GM12878 (cell line): ENCODE measurements at regions of chr6 and their contacts with region 1.

Region 1: DNA sequence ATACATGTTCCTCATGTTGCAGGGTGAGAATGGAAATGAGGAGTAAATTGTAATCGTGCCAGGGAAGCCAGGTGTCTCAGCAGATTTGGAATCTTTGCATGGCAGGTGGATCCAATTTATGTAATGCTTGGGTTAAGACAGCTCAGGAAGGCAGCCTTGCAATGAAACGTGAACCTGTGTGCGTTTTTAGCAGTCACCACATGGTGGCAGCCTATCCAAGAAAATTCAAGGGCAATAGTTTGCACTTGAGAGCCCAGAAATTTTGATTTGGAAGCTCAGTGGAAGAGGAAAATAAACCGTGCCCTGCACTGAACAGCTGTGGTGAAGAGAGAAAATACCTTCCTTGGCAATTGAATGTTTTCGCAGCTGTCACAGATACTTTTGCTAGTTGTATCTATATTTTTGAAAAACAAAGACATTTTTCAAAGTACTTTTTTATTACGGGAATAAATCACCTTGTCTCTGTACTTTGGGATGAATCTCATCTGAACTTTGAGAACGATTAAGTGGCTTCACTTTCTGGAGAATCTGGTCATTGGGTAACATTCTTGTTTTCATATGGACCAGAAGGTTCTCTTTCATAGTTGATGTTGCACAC is 26.5 kb downstream of the MTHFD1L start:
- DNase-seq: peak; percentile 34
- ATAC-seq: peak; percentile 69
- H3K4me3 ChIP-seq: no peak overlapping the region
- H3K27ac ChIP-seq: no peak overlapping the region
- H3K4me1 ChIP-seq: peaks cover 40% of the 10 kb centered on the region
- H3K27me3 ChIP-seq: no peaks in the 10 kb centered on the region
- CTCF ChIP-seq: peak; percentile 76 to 89 (median 88)
- EP300 ChIP-seq: no peak
- POLR2A ChIP-seq: no peak
- RAD21 ChIP-seq: peak; percentile 90

Region 2: DNA sequence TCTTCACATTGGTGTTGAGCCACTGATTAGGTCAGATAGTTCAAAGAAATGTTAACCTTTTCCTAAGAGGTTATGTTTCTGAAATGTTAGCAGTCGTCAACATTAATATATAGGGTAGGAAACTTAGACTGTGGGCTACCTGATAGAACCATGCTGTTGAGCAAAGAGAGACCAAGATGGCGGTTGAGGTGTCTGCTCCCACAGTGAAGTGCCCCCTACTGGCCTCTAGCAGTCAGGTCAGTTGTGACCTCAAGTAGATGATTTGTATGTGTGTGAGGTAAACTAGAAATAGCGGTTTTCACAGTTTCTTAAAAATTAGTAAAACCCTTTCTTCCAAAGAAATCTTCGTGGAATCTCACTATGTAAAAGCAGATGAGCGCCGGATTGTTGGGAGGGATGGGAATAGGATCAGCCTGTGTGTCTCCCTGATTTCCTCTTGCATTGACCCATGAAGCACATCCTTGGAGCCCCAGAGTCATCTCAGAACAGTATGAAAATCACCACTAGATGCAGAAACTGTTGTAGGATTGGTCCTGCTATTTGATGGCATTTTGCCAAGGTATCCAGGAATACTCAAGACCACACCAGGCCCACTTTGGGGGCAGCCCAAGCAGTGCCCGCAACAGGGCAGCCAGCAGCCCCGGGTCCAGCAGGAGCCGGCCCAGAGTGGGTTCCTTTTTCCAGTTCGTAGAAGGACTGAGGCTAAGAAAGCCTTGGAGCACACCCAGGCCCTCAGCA is 14.0 kb after region 1 on chr6:
- CTCF ChIA-PET with region 1: interaction called, 62 read pairs
- POLR2A ChIA-PET with region 1: no interaction called
- RAD21 ChIA-PET with region 1: interaction called, 3 read pairs
- SMC1A ChIA-PET with region 1: interaction called, 15 read pairs
- in situ Hi-C with region 1: no loop called
- intact Hi-C with region 1: no loop called
- DNase-seq: no peak
- ATAC-seq: peak; percentile 66; the same call in 2 of the 3 replicates
- H3K4me3 ChIP-seq: no peak overlapping the region
- H3K27ac ChIP-seq: no peak overlapping the region
- H3K4me1 ChIP-seq: no peaks in the 10 kb centered on the region
- H3K27me3 ChIP-seq: no peaks in the 10 kb centered on the region
- CTCF ChIP-seq: peak; percentile 9 to 50 (median 34); a peak in 3 of 6 replicates
- EP300 ChIP-seq: no peak
- POLR2A ChIP-seq: no peak
- RAD21 ChIP-seq: no peak

Region 3: DNA sequence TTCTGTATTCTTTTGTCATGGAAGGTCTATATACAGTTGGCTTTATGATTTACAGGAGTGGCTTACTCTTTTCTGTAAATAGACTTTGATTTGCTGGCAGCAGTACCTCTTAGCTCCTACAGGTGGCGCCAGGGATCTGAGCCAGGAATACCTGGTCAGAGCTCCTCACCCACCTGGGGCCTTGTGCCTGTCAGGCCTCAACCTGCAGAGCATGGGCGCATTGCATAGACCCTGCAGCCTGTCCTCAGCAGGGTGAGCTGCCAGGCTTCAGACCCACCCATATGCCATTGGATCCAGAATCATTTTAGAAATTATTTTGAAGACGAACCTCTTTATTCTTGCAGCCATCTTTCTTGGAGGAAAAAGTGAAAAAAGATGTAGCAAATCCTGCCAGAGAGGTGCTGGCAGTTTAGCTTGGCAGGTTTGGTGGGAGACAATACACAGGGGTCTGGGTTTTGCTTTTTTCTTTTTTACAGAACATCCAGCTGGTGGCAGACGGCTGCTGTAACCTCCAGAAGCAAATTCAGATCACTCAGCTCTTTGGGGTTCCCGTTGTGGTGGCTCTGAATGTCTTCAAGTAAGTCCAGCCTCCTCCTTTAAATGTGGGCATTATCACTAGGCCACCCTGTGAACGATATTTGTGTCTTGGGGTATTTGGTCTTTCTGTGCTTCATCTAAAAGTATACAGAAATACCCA is 122.6 kb after region 1 on chr6:
- CTCF ChIA-PET with region 1: interaction called, 37 read pairs
- POLR2A ChIA-PET with region 1: no interaction called
- RAD21 ChIA-PET with region 1: interaction called, 17 read pairs
- SMC1A ChIA-PET with region 1: interaction called, 11 read pairs
- in situ Hi-C with region 1: no loop called
- intact Hi-C with region 1: loop called (anchors 5 kb)
- DNase-seq: no peak
- ATAC-seq: peak; percentile 86
- H3K4me3 ChIP-seq: no peak overlapping the region
- H3K27ac ChIP-seq: no peak overlapping the region
- H3K4me1 ChIP-seq: no peaks in the 10 kb centered on the region
- H3K27me3 ChIP-seq: no peaks in the 10 kb centered on the region
- CTCF ChIP-seq: peak; percentile 95 to 97 (median 97)
- EP300 ChIP-seq: no peak
- POLR2A ChIP-seq: no peak
- RAD21 ChIP-seq: peak; percentile 90

Region 4: DNA sequence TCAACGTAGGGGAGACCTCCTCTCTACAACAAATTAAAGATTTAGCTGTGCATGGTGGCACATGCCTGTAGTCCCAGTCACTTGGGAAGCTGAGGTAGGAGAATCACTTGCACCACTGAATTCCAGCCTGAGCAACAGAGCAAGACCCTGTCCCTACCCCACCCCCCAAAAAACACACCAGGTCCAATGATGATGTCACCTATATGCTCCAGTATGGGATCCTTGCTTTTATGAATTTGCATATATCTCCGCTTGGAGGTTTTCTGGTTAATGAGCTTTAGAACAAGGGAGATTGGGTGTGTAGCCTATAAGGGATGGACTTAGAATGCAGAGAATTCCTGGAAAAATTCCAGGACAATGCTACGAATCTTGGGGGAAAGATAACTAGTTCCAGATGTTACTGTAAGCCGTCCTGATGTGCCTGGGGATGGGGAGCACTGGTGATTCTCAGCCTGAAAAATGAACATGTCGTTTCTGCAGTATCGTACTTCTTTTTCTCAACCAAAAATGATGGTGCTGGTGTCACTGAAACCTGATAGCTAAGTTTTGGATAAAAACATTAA is 438.2 kb after region 1 on chr6:
- CTCF ChIA-PET with region 1: interaction called, 369 read pairs
- POLR2A ChIA-PET with region 1: no interaction called
- RAD21 ChIA-PET with region 1: interaction called, 180 read pairs
- SMC1A ChIA-PET with region 1: interaction called, 200 read pairs
- in situ Hi-C with region 1: loop called (anchors 5 kb)
- intact Hi-C with region 1: no loop called
- DNase-seq: no peak
- ATAC-seq: no peak
- H3K4me3 ChIP-seq: no peak overlapping the region
- H3K27ac ChIP-seq: no peak overlapping the region
- H3K4me1 ChIP-seq: no peaks in the 10 kb centered on the region
- H3K27me3 ChIP-seq: peaks cover 0 to 4% of the 10 kb centered on the region in 2 experiments; a peak in 2 of 4 replicates
- CTCF ChIP-seq: no peak
- EP300 ChIP-seq: no peak
- POLR2A ChIP-seq: no peak
- RAD21 ChIP-seq: no peak

Region 5: GRCh38 chr6:151451950-151452749 is 560.2 kb after region 1 on chr6 and contains the start of gene RMND1:
- CTCF ChIA-PET with region 1: no interaction called
- POLR2A ChIA-PET with region 1: no interaction called
- RAD21 ChIA-PET with region 1: no interaction called
- SMC1A ChIA-PET with region 1: no interaction called
- in situ Hi-C with region 1: no loop called
- intact Hi-C with region 1: loop called (anchors 10 kb)
- DNase-seq: peak; percentile 99
- ATAC-seq: peak; percentile 97
- H3K4me3 ChIP-seq: peak within 1 kb of the TSS; percentile 85
- H3K27ac ChIP-seq: peak within 1 kb of the TSS; percentile 89
- H3K4me1 ChIP-seq: peaks cover 3% of the 10 kb centered on the region
- H3K27me3 ChIP-seq: no peaks in the 10 kb centered on the region
- CTCF ChIP-seq: no peak
- EP300 ChIP-seq: peak in 1 of 2 experiments; percentile 33; a peak in 2 of 4 replicates
- POLR2A ChIP-seq: peak; percentile 87
- RAD21 ChIP-seq: no peak
- polyA plus RNA-seq, gene RMND1: 18.9 to 24.0 TPM